ENCODE measurements at regions of chr1 and their contacts with region 1.

Region 1: GRCh38 chr1:220786337-220787068 is at the start of gene MTARC1:
- DNase-seq: peak; percentile 90 to 91
- H3K4me3 ChIP-seq: peak within 1 kb of the TSS; percentile 55
- H3K4me3 Mint-ChIP-seq: peak within 1 kb of the TSS; percentile 85
- H3K27ac Mint-ChIP-seq: peak within 1 kb of the TSS; percentile 81
- H3K4me1 ChIP-seq: peaks cover 33% of the 10 kb centered on the region
- H3K4me1 Mint-ChIP-seq: peaks cover 28% of the 10 kb centered on the region
- H3K27me3 ChIP-seq: no peaks in the 10 kb centered on the region
- H3K27me3 Mint-ChIP-seq: no peaks in the 10 kb centered on the region
- CTCF ChIP-seq: no peak
- total RNA-seq, gene MTARC1: 88.7 and 93.0 TPM in 2 replicates

Region 2: GRCh38 chr1:220594356-220594755 is 192.1 kb before region 1 on chr1:
- CTCF ChIA-PET with region 1: no interaction called
- POLR2A ChIA-PET with region 1: no interaction called
- intact Hi-C with region 1: no loop called
- DNase-seq: no peak
- H3K4me3 ChIP-seq: no peak overlapping the region
- H3K4me3 Mint-ChIP-seq: no peak overlapping the region
- H3K27ac Mint-ChIP-seq: no peak overlapping the region
- H3K4me1 ChIP-seq: no peaks in the 10 kb centered on the region
- H3K4me1 Mint-ChIP-seq: no peaks in the 10 kb centered on the region
- H3K27me3 ChIP-seq: no peaks in the 10 kb centered on the region
- H3K27me3 Mint-ChIP-seq: peaks cover 4% of the 10 kb centered on the region
- CTCF ChIP-seq: no peak

Region 3: DNA sequence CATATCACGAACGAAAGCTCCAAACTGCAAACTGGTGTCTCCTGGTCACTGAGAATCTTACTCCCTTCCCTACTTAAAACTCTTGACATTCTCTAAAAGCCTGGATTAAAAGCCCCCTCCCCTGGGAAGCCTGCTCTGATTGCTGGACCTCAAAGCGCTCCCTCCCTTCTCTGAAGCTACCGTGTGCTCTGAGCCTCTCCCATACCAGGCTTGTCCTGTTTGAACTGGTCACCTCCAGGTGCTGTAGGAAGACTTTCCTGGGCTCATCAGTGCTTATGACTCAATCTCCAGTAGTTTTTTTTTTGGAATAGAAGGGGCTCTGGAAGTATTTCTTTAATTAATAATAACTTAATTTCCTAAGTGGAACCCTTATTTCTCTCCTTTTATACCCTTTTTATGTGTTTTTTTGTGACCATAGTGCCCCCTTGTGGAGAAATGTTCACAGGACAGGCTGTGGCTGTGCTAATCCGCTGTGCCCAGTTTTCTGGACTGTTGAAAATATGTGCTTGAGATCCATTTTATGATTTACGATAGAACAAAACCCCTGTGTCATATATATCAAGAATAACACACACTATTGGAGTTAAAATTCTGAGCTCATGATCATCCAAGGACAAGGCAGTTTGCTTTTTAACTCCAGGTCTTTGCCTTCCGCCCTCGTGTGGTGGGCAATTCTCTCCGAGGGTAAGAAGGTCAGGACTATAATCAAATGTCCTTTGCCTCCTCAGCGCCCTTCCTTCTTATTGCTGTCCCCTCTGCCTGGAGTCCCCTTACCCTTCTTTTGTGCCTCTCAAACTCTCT is 17.1 kb after region 1 on chr1:
- CTCF ChIA-PET with region 1: no interaction called
- POLR2A ChIA-PET with region 1: no interaction called
- intact Hi-C with region 1: loop called (anchors 1 kb)
- DNase-seq: peak in 1 of 2 experiments; percentile 47
- H3K4me3 ChIP-seq: no peak overlapping the region
- H3K4me3 Mint-ChIP-seq: no peak overlapping the region
- H3K27ac Mint-ChIP-seq: peak overlapping the region; percentile 11
- H3K4me1 ChIP-seq: no peaks in the 10 kb centered on the region
- H3K4me1 Mint-ChIP-seq: no peaks in the 10 kb centered on the region
- H3K27me3 ChIP-seq: no peaks in the 10 kb centered on the region
- H3K27me3 Mint-ChIP-seq: no peaks in the 10 kb centered on the region
- CTCF ChIP-seq: peak; percentile 81 to 87

Measured in Caco-2 (cell line).